HEK293 (cell line): ENCODE measurements at regions of chr9 and their contacts with region 1.

Region 1: GRCh38 chr9:101449140-101449721 is 13.7 kb upstream of the ALDOB start:
- H3K4me3 ChIP-seq: peak overlapping the region; percentile 55
- H3K27ac ChIP-seq: no peak overlapping the region
- H3K4me1 ChIP-seq: no peaks in the 10 kb centered on the region
- CTCF ChIP-seq: peak; percentile 92

Region 2: GRCh38 chr9:100933656-100934055 is 515.6 kb before region 1 on chr9:
- CTCF ChIA-PET with region 1: no interaction called
- POLR2A ChIA-PET with region 1: no interaction called
- H3K4me3 ChIP-seq: no peak overlapping the region
- H3K27ac ChIP-seq: no peak overlapping the region
- H3K4me1 ChIP-seq: no peaks in the 10 kb centered on the region
- CTCF ChIP-seq: no peak

Region 3: DNA sequence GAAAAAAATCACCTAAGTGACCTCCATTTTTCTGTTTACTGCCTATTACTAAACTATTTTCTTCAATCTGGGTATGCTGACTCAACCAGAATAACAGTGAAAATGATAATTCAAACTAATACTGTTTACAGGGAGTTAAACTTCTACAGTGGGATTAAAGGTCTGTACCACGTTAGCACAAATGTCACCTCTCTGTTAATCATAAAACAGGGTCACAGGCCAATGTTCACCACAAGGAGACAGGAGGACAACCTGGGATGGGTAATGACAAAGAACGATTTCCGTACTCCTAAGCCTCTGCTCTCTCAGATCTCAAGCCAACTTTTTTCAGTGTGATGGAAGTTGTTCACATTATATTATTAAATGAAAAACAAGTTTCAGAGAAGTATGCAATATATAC is 16.0 kb before region 1 on chr9:
- CTCF ChIA-PET with region 1: interaction called, 14 read pairs
- POLR2A ChIA-PET with region 1: interaction called, 3 read pairs
- H3K4me3 ChIP-seq: no peak overlapping the region
- H3K27ac ChIP-seq: no peak overlapping the region
- H3K4me1 ChIP-seq: no peaks in the 10 kb centered on the region
- CTCF ChIP-seq: no peak

Region 4: DNA sequence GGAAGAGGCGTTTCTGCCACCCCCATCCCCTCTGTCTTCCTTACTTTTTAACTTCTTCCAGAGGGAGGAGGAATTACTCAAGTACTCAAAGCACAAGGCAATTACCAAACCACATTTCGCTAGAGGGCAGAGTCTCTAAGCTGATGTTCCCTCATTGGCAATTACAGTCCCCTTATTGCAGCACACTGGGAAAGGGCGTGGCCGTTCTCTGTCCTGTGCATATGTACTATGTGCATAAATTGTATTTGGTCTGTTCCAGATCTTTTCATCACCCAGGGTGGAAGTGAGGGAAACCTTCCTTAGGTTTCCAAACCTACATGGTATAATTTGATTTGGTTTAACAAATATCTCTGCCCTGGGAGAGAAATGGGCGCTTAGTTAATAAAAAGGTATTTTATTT is 16.2 kb after region 1 on chr9:
- CTCF ChIA-PET with region 1: interaction called, 41 read pairs
- POLR2A ChIA-PET with region 1: no interaction called
- H3K4me3 ChIP-seq: no peak overlapping the region
- H3K27ac ChIP-seq: no peak overlapping the region
- H3K4me1 ChIP-seq: no peaks in the 10 kb centered on the region
- CTCF ChIP-seq: peak; percentile 48; the same call in 1 of the 2 replicates

Region 5: DNA sequence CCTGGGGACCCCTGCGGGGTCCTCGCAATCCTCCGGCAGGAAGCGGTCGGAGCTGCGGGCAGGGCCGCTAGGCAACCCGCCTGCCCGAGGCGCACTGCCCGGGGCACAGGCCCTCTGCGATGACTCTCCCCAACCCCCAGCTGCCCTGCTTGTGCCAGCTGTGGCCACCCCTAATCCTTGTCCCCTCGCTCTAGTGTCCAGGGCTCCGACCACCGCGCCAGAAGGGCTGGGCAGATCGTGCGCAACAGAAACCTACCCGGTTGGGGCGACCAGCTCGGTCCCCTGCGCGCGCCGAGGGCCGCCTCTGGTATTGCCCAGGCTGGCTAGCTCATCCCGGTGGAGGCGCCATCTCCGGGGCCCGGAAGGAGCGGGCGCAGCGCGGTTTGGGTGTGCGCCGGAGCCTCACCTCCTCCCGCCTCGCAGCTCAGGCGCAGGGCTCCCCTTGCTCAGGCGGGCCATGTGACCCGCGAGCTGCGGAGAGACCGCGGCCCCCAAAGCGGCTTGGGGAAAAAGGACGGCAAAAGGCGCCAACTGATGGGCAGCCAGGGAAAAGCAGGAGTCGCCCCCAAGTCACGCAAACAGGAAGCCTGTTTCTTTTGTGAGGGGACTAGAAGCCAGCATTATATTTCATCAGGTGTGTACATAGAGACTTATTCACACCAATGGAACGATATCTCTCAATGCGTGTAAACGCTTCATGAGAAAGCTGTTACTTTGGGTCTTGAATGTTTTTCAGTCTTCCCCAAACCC is 37.6 kb after region 1 on chr9:
- CTCF ChIA-PET with region 1: interaction called, 14 read pairs
- POLR2A ChIA-PET with region 1: no interaction called
- H3K4me3 ChIP-seq: peak overlapping the region; percentile 53
- H3K27ac ChIP-seq: peak overlapping the region; percentile 72; the same call in 1 of the 2 replicates
- H3K4me1 ChIP-seq: no peaks in the 10 kb centered on the region
- CTCF ChIP-seq: peak; percentile 73

Region 6: DNA sequence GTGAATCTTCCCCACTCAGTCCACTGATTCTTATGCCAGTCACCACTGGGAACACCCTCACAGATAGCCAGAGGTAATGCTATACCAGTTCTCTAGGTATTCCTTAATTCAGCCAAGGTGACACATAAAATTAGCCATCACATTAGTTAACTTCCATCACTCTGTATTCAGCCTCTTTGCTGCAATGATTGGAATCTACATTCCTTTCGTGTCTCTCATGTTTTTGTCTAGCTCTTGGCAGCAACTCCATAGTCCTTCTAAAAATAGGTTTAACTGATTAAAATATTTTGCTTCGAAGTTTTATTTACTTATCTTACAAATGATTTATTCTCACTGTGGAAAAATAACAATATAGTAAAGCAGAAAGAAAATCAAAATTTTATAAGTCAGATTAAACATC is 64.8 kb after region 1 on chr9:
- CTCF ChIA-PET with region 1: interaction called, 15 read pairs
- POLR2A ChIA-PET with region 1: no interaction called
- H3K4me3 ChIP-seq: no peak overlapping the region
- H3K27ac ChIP-seq: no peak overlapping the region
- H3K4me1 ChIP-seq: no peaks in the 10 kb centered on the region
- CTCF ChIP-seq: no peak

Region 7: DNA sequence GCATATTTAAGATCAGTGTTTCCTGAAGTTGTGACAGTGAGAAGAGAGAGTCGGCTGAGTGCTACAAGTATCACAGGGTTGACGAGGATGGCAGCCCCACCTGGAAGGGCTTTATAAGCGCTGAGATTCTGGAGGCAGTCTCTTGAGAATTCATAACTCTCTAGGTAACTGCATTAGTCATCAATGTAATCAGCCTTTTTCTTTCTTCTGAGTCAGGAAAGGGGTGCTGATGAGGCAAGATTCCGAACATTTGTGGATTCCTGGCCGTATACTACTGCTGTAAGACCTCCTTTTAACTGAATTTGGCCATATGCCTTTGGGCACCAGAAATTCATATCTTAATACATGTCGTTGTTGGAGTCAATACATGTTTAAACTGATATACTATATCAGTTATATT is 77.8 kb after region 1 on chr9:
- CTCF ChIA-PET with region 1: interaction called, 11 read pairs
- POLR2A ChIA-PET with region 1: no interaction called
- H3K4me3 ChIP-seq: no peak overlapping the region
- H3K27ac ChIP-seq: no peak overlapping the region
- H3K4me1 ChIP-seq: no peaks in the 10 kb centered on the region
- CTCF ChIP-seq: no peak

Region 8: GRCh38 chr9:101579711-101580545 is 130.7 kb after region 1 on chr9:
- CTCF ChIA-PET with region 1: no interaction called
- POLR2A ChIA-PET with region 1: no interaction called
- H3K4me3 ChIP-seq: no peak overlapping the region
- H3K27ac ChIP-seq: no peak overlapping the region
- H3K4me1 ChIP-seq: no peaks in the 10 kb centered on the region
- CTCF ChIP-seq: no peak